AG04450 (cell line): ENCODE measurements at regions of chr15 and their contacts with region 1.

Region 1: GRCh38 chr15:38991126-38991525 is 426.5 kb upstream of the RASGRP1 start:
- DNase-seq: no peak
- H3K4me3 ChIP-seq: no peak overlapping the region
- H3K27ac ChIP-seq: no peak overlapping the region
- H3K27me3 ChIP-seq: no peaks in the 10 kb centered on the region
- CTCF ChIP-seq: peak; percentile 53

Region 2: GRCh38 chr15:38707802-38708671 is 283.1 kb before region 1 on chr15:
- CTCF ChIA-PET with region 1: interaction called, 12 read pairs
- POLR2A ChIA-PET with region 1: no interaction called
- DNase-seq: no peak
- H3K4me3 ChIP-seq: no peak overlapping the region
- H3K27ac ChIP-seq: no peak overlapping the region
- H3K27me3 ChIP-seq: no peaks in the 10 kb centered on the region
- CTCF ChIP-seq: peak; percentile 92

Region 3: GRCh38 chr15:38867556-38867955 is 123.6 kb before region 1 on chr15:
- CTCF ChIA-PET with region 1: no interaction called
- POLR2A ChIA-PET with region 1: no interaction called
- DNase-seq: no peak
- H3K4me3 ChIP-seq: no peak overlapping the region
- H3K27ac ChIP-seq: no peak overlapping the region
- H3K27me3 ChIP-seq: no peaks in the 10 kb centered on the region
- CTCF ChIP-seq: no peak